ENCODE measurements at regions of chr6 and their contacts with region 1.

Region 1: DNA sequence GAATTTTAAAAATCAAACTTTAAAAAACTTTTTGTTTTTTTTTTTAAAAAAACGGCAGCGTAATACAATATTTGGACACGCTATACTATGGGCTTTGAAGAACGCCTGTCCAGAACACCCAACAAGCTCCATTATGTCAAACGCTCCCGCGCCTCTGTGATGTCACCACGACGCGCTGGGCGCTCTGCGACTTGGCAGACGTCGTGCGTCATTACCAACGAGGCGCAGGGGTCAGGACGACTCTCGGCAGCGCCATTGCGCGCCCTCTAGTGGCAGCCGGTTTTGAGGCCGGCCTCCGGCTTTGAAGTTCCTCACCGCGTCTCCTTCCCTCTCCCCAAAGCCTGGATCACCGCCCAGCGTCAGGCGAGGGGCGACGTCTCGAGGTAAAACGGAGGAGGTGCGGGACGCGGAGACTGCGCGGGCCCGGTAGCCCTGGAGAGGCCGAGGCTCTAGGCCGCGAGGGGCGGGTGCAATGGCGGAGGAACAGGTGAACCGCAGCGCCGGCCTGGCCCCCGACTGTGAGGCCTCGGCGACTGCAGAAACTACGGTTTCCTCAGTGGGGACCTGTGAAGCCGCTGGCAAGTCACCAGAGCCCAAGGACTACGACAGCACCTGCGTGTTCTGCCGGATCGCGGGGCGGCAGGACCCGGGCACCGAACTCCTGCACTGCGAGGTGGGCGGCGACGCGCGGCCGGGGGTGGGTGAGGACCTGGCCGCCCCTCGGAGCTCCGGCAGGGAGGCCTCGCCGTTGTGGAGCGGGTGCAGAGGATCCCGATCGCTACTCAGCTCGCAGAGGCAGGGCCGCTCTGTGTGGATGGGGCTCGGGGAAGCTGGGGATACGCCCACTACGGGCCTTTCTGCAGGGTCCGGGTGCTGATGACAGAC is at the start of gene HINT3:
- DNase-seq: peak; percentile 66
- H3K4me3 ChIP-seq: peak within 1 kb of the TSS; percentile 93
- H3K27me3 ChIP-seq: no peaks in the 10 kb centered on the region
- CTCF ChIP-seq: peak; percentile 96
- polyA plus RNA-seq, gene HINT3: 1.3 and 3.1 TPM in 2 replicates

Region 2: DNA sequence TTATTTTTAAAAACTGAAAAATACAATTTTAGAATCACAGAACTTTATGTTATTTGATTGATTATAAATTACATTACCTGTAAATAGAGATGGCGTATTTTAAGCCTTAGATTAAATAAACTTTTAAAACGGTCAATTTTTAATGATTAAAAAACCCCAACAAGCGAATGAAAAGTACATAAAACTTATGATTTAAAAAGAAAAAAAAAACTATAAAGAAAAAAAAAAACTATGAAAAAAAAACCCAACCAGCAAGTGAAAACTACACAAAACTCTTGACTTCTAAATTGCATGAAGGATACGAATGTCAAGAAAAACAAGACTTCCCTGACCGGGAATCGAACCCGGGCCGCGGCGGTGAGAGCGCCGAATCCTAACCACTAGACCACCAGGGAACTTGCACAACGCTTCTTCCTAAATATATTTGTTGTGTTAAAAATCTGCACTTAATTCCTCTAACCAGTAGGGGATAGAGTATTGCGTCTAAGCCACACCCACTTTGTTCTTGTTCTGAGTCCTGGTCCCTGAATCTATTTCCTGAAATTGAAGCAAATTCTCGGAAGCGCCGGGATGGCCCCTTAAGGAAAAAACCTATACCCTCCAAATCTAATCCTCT is 176.7 kb before region 1 on chr6:
- CTCF ChIA-PET with region 1: interaction called, 21 read pairs
- POLR2A ChIA-PET with region 1: interaction called, 5 read pairs
- DNase-seq: peak; percentile 80
- H3K4me3 ChIP-seq: peak overlapping the region; percentile 62
- H3K27me3 ChIP-seq: 0 out of 2 replicates have a peak, but pooled peaks cover 5% of the 10 kb centered on the region
- CTCF ChIP-seq: peak; percentile 21; the same call in 1 of the 2 replicates

Region 3: GRCh38 chr6:125858427-125859320 is 98.1 kb before region 1 on chr6:
- CTCF ChIA-PET with region 1: interaction called, 37 read pairs
- POLR2A ChIA-PET with region 1: no interaction called
- DNase-seq: no peak
- H3K4me3 ChIP-seq: no peak overlapping the region
- H3K27me3 ChIP-seq: no peaks in the 10 kb centered on the region
- CTCF ChIP-seq: peak; percentile 90

Region 4: DNA sequence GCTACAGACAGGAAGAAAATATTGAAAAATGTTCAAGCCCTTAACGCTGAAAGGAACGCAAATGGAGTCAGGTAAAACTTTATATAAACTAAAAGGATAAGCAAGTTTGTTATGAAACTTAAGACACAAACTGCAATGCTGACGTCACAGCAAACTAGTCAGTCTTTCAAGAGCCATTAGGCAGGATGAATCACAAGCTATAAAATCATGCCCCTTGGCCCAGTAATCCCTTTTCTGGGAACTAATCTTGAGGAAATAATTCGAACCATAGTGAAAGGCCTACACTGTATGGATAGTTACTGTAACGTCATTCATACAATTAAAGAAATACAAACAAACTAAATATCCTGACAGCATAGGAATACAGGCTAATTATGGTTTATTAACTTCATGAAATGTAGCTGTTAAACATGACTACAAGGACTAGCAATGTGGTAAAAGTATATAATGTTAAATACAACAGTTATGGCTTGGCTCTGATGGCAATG is 42.8 kb before region 1 on chr6:
- CTCF ChIA-PET with region 1: interaction called, 23 read pairs
- POLR2A ChIA-PET with region 1: interaction called, 6 read pairs
- DNase-seq: peak; percentile 91
- H3K4me3 ChIP-seq: no peak overlapping the region
- H3K27me3 ChIP-seq: no peaks in the 10 kb centered on the region
- CTCF ChIP-seq: no peak

Region 5: GRCh38 chr6:125968493-125968892 is 11.7 kb after region 1 on chr6:
- CTCF ChIA-PET with region 1: interaction called, 17 read pairs
- POLR2A ChIA-PET with region 1: no interaction called
- DNase-seq: no peak
- H3K4me3 ChIP-seq: no peak overlapping the region
- H3K27me3 ChIP-seq: no peaks in the 10 kb centered on the region
- CTCF ChIP-seq: no peak

Region 6: GRCh38 chr6:125986300-125987025 is 29.7 kb after region 1 on chr6 and contains the start of gene TRMT11:
- CTCF ChIA-PET with region 1: no interaction called
- POLR2A ChIA-PET with region 1: interaction called, 11 read pairs
- DNase-seq: no peak
- H3K4me3 ChIP-seq: peak within 1 kb of the TSS; percentile 73
- H3K27me3 ChIP-seq: no peaks in the 10 kb centered on the region
- CTCF ChIP-seq: no peak
- polyA plus RNA-seq, gene TRMT11: 10.1 and 19.0 TPM in 2 replicates

Measured in BJ (cell line).